Activated CD4-positive, alpha-beta T cell treated with anti-CD3 and anti-CD28 coated beads, Interleukin-2, amount 10 ng/mL, durations not matched to agents 24 days and 14 days (primary cell): ENCODE measurements at regions of chr1 and their contacts with region 1.

Region 1: DNA sequence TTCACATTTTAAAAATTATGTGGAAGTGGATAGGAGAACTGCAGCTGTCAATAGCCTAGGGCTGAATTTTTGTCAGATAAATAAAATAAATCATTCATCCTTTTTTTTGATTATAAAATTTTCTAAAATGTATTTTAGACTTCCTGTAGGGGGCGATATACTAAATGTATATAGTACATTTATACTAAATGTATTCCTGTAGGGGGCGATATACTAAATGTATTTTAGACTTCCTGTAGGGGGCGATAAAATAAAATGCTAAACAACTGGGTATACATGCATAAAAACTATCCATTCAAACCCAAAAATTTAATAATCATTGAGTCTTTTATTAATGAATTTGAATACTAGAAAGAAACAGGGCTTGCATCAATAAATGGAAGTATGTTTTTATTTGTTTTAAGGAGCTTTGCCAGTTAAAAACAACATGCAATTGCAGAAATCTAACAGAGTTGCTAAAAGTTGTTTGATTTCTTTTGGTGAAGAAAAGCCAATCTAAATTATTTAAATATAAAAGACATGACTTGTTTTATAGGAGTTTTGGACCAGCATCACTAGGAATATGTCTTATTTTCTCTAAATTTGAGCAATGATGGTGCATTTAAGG is 31.4 kb downstream of the CLCA1 start:
- DNase-seq: no peak
- H3K4me3 Mint-ChIP-seq: no peak overlapping the region
- H3K27ac Mint-ChIP-seq: no peak overlapping the region
- H3K4me1 Mint-ChIP-seq: peaks cover 12% of the 10 kb centered on the region
- H3K27me3 Mint-ChIP-seq: peaks cover 28% of the 10 kb centered on the region

Region 2: GRCh38 chr1:86395771-86396497 is 104.2 kb before region 1 on chr1 and contains the start of gene ODF2L:
- intact Hi-C with region 1: loop called (anchors 5 kb)
- DNase-seq: peak; percentile 97
- H3K4me3 Mint-ChIP-seq: peak within 1 kb of the TSS; percentile 94
- H3K27ac Mint-ChIP-seq: peak within 1 kb of the TSS; percentile 98
- H3K4me1 Mint-ChIP-seq: peaks cover 37% of the 10 kb centered on the region
- H3K27me3 Mint-ChIP-seq: peaks cover 13% of the 10 kb centered on the region
- total RNA-seq, gene ODF2L: 16.0 and 23.3 TPM in 2 replicates

Region 3: GRCh38 chr1:86419277-86419903 is 80.7 kb before region 1 on chr1:
- intact Hi-C with region 1: loop called (anchors 1 kb)
- DNase-seq: peak; percentile 85
- H3K4me3 Mint-ChIP-seq: peak overlapping the region; percentile 44
- H3K27ac Mint-ChIP-seq: no peak overlapping the region
- H3K4me1 Mint-ChIP-seq: peaks cover 2% of the 10 kb centered on the region
- H3K27me3 Mint-ChIP-seq: peaks cover 14% of the 10 kb centered on the region

Region 4: DNA sequence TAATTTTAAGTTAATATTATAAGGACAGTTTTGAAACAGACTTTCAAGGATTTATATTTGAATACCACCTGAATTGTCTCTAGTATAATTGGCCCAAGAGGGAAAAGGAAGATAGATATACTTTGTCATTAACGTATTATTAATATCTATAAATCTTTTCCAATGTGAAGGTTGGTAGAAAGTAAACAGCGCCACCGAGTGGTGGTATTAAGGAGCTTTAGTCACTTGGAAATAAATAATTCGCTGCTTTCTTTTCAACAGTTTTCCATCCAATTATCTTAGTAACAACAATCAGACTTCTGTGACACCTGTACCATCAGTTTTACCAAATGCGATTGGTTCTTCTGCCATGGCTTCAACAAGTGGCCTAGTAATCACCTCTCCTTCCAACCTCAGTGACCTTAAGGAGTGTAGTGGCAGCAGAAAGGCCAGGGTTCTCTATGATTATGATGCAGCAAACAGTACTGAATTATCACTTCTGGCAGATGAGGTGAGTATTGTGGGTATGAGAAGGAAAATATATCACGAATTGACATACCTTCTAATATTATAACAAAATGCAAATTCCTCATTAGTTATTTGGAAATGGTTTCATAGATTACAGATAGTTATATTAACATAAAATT is 242.0 kb after region 1 on chr1:
- intact Hi-C with region 1: loop called (anchors 5 kb)
- DNase-seq: peak; percentile 72
- H3K4me3 Mint-ChIP-seq: no peak overlapping the region
- H3K27ac Mint-ChIP-seq: no peak overlapping the region
- H3K4me1 Mint-ChIP-seq: peaks cover 4% of the 10 kb centered on the region
- H3K27me3 Mint-ChIP-seq: no peaks in the 10 kb centered on the region